ENCODE measurements at regions of chr12 and their contacts with region 1.

Region 1: GRCh38 chr12:108511633-108512540 is 3.2 kb upstream of the FICD start:
- DNase-seq: peak; percentile 85
- ATAC-seq: no peak
- H3K4me3 Mint-ChIP-seq: peak overlapping the region; percentile 28
- H3K27ac Mint-ChIP-seq: no peak overlapping the region
- H3K4me1 Mint-ChIP-seq: peaks cover 27% of the 10 kb centered on the region
- H3K27me3 Mint-ChIP-seq: no peaks in the 10 kb centered on the region

Region 2: DNA sequence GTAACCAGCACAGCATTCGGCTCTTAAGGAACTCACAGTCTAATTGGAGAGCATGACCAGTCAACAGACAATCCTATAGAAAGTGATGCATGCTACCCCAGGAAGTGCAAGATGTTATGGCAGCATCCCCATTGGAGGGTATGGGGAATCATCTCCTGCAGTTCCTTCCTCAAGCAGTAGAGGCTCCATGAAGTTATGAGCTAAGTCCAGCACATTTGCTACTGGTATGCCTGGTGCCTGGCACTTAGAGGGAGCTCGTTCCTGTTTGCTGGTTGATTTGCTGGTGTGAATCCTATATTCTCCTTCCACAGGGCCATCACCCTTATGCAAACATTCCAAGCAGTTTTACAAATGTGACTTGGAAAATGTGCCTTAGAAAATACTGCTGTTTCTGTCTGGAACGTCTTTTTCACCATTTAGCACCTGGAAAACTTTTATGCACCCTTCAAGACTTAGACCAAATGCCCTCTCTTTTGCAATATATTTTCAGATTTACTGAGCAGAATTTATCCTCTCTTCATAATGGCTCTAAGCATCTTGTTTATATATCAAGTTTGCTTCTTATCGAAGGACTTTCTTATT is 518.9 kb before region 1 on chr12:
- CTCF ChIA-PET with region 1: interaction called, 20 read pairs
- POLR2A ChIA-PET with region 1: no interaction called
- DNase-seq: peak; percentile 25
- ATAC-seq: no peak
- H3K4me3 Mint-ChIP-seq: no peak overlapping the region
- H3K27ac Mint-ChIP-seq: no peak overlapping the region
- H3K4me1 Mint-ChIP-seq: no peaks in the 10 kb centered on the region
- H3K27me3 Mint-ChIP-seq: peaks cover 19% of the 10 kb centered on the region

Region 3: DNA sequence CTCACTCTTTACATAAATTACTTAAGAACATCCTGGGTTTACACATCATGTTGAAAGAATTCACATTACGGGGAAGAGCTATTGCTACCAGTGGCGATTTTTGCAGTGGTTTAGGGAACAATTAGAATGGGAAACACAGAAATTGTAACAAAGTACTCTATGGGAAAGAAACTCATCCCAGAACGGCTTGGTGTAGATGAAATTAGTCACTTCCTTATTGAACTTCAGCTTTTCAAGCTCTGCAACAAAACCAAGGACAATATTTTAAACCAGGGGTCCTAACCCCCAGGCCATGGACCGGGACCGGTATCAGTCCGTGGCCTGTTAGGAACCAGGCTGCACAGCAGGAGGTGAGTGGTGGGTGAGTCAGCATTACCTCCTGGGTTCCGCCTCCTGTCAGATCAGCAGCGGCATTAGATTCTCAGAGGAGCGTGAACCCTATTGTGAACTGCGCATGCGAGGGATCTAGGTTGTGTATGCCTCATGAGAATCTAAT is 29.1 kb before region 1 on chr12:
- CTCF ChIA-PET with region 1: no interaction called
- POLR2A ChIA-PET with region 1: no interaction called
- DNase-seq: no peak
- ATAC-seq: no peak
- H3K4me3 Mint-ChIP-seq: no peak overlapping the region
- H3K27ac Mint-ChIP-seq: no peak overlapping the region
- H3K4me1 Mint-ChIP-seq: peaks cover 3% of the 10 kb centered on the region
- H3K27me3 Mint-ChIP-seq: peaks cover 11% of the 10 kb centered on the region

Region 4: GRCh38 chr12:108526482-108527165 is 14.7 kb after region 1 on chr12:
- CTCF ChIA-PET with region 1: interaction called, 13 read pairs
- POLR2A ChIA-PET with region 1: no interaction called
- DNase-seq: no peak
- ATAC-seq: peak; percentile 21
- H3K4me3 Mint-ChIP-seq: no peak overlapping the region
- H3K27ac Mint-ChIP-seq: peak overlapping the region; percentile 32
- H3K4me1 Mint-ChIP-seq: peaks cover 16% of the 10 kb centered on the region
- H3K27me3 Mint-ChIP-seq: no peaks in the 10 kb centered on the region

Region 5: DNA sequence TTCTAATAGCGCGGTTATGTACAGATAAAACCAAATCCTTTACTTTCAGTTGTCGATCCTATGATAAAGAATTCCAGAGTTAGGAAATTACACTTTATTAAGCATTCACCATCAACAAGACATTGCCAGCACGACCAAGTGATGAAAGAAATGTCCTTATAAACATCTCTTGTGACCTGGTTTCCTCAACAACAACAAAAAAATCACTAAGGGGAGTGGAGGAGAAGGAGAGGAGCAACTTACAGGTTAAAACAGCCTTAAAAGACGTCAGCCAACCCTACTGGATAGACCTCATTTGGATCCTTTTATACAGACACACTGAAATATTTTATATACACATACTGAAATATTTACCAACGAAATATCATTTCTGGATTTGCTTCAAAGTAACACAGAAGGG is 26.3 kb after region 1 on chr12:
- CTCF ChIA-PET with region 1: interaction called, 11 read pairs
- POLR2A ChIA-PET with region 1: no interaction called
- DNase-seq: no peak
- ATAC-seq: no peak
- H3K4me3 Mint-ChIP-seq: no peak overlapping the region
- H3K27ac Mint-ChIP-seq: no peak overlapping the region
- H3K4me1 Mint-ChIP-seq: peaks cover 2% of the 10 kb centered on the region
- H3K27me3 Mint-ChIP-seq: no peaks in the 10 kb centered on the region

Region 6: DNA sequence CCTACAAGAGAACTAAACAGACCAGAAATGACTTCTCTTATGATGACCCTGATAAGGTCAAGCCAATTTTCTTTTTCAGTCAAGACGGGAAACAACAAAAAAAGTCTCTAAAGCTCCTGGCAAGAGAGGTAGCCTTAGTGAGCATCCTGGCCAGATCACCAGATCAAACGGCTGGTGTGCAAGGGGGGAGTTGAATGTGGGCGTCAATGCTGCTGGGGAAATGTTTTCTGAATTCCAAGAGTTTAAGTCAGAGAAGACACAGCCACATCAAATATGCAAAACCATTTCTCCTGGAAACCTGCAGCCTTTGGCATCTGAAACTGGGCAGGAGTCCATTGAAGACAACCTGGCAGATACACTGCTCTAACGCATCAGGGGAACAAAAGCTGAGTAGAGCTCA is 137.8 kb after region 1 on chr12:
- CTCF ChIA-PET with region 1: no interaction called
- POLR2A ChIA-PET with region 1: no interaction called
- DNase-seq: no peak
- ATAC-seq: no peak
- H3K4me3 Mint-ChIP-seq: no peak overlapping the region
- H3K27ac Mint-ChIP-seq: peak overlapping the region; percentile 13
- H3K4me1 Mint-ChIP-seq: peaks cover 31% of the 10 kb centered on the region
- H3K27me3 Mint-ChIP-seq: no peaks in the 10 kb centered on the region